IMR-90 (cell line): ENCODE measurements at regions of chr19 and their contacts with region 1.

Region 1: GRCh38 chr19:45200568-45200994 is 22.0 kb downstream of the BLOC1S3 start:
- DNase-seq: peak; percentile 57
- ATAC-seq: peak; percentile 86
- H3K4me3 ChIP-seq: no peak overlapping the region
- H3K27ac ChIP-seq: no peak overlapping the region
- H3K4me1 ChIP-seq: no peaks in the 10 kb centered on the region
- H3K27me3 ChIP-seq: no peaks in the 10 kb centered on the region
- CTCF ChIP-seq: peak; percentile 53
- POLR2A ChIP-seq: no peak
- RAD21 ChIP-seq: peak; percentile 68

Region 2: DNA sequence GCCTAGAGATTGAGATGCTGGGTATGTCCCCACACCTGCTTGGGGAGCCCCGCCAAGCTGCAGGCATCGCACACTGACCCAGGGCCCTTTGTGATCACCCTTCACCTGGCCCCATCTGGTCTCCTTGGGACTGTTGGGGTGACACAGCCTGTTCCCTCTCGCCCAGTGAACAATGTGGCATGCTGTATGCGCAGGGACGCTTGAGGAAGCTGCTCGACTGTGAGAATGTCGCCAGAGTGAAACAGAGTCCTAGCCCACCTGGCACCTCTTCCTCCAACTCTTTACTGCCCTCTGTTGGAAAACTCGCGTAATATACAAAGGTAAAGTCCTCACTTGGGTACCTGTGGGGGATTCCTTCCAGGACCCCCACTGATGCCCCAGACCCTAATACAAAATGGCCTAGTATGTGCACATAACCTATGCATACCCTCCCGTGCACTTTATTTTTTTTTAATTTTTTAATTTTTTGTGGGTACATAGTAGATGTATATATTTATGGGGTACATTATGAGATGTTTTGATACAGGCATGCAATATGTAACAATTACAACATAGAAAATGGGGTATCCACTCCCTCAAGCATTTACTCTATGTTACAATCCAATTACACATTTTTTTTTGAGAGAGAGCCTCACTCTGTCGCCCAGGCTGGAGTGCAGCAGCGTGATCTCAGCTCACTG is 13.0 kb before region 1 on chr19:
- CTCF ChIA-PET with region 1: interaction called, 3 read pairs
- POLR2A ChIA-PET with region 1: interaction called, 15 read pairs
- dilution Hi-C with region 1: no loop called
- in situ Hi-C with region 1: no loop called
- intact Hi-C with region 1: no loop called
- DNase-seq: no peak
- ATAC-seq: no peak
- H3K4me3 ChIP-seq: no peak overlapping the region
- H3K27ac ChIP-seq: no peak overlapping the region
- H3K4me1 ChIP-seq: no peaks in the 10 kb centered on the region
- H3K27me3 ChIP-seq: no peaks in the 10 kb centered on the region
- CTCF ChIP-seq: peak; percentile 40
- POLR2A ChIP-seq: no peak
- RAD21 ChIP-seq: peak; percentile 25; the same call in 1 of the 2 replicates

Region 3: DNA sequence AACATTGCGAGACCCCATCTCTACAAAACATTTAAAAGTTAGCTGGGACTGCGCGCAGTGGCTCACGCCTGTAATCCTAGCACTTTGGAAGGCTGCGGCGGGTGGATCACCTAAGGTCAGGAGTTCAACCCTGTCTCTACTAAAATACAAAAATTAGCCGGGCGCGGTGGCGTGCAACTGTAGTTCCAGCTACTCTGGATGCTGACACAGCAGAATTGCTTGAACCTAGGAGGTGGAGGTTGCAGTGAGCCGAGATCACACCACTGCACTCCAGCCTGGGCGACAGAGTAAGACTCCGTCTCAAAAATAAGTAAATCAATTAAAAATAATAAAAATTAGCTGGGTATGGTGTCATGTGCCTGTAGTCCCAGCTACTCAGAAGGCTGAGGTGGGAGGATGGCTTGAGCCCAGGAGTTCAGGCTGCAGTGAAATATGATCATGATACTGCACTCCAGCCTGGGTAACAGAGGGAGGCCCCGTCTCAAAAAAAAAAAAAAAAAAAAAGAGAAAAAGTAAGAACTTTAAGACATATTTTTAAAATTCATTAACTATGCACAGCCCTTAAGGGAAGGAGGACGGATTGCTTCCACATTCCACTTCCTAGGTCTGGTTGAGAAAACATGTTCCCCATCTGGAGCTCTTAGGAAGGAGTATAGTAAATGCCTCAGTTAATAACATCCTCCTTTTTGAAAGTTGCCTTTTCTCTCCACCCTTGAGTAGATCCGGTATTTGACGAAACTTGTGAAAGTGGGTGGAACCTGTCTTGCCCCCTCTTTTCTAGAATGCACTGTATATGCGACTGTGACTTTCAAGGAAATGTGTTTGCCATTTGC is 18.5 kb after region 1 on chr19:
- CTCF ChIA-PET with region 1: no interaction called
- POLR2A ChIA-PET with region 1: interaction called, 23 read pairs
- dilution Hi-C with region 1: no loop called
- in situ Hi-C with region 1: no loop called
- intact Hi-C with region 1: no loop called
- DNase-seq: no peak
- ATAC-seq: no peak
- H3K4me3 ChIP-seq: no peak overlapping the region
- H3K27ac ChIP-seq: no peak overlapping the region
- H3K4me1 ChIP-seq: peaks cover 2% of the 10 kb centered on the region; the same call in 1 of the 2 replicates
- H3K27me3 ChIP-seq: peaks cover 66% of the 10 kb centered on the region
- CTCF ChIP-seq: no peak
- POLR2A ChIP-seq: no peak
- RAD21 ChIP-seq: no peak

Region 4: DNA sequence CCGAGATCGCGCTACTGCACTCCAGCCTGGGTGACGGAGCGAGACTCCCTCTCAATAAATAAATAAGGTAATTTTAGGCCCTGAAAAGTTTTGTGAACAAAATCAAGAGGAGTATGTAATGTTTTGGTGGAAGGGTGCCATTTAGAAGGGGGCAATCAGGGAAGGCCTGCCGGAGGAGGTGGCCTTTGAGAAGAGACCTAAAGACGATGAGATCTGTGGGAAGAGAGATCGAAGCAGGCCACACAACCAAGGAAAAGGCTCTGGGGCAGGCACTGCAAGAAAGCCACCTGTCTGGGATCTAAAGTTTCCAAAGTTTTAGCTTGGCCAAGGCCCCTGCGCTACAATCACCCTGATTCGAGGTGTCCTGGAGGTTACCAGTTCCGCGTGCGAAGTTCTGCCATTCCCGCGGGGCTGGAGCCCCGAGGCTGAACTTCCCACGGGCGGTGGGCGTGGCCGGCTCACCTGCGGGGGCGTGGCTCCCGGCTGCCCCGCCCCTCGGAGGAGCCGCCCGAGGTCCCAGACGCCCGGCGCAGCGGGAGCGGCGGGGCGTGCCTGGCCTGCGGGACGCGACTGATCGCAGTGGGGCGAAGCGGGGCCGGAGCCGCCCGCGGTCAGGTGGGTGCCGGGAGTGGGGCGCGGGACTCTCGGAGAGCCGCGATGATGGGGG is 139.8 kb after region 1 on chr19 and contains the start of gene KLC3:
- CTCF ChIA-PET with region 1: interaction called, 3 read pairs
- POLR2A ChIA-PET with region 1: no interaction called
- dilution Hi-C with region 1: no loop called
- in situ Hi-C with region 1: no loop called
- intact Hi-C with region 1: loop called (anchors 1 kb)
- DNase-seq: no peak
- ATAC-seq: no peak
- H3K4me3 ChIP-seq: no peak within 1 kb of the TSS
- H3K27ac ChIP-seq: no peak within 1 kb of the TSS
- H3K4me1 ChIP-seq: no peaks in the 10 kb centered on the region
- H3K27me3 ChIP-seq: peaks cover 17% of the 10 kb centered on the region
- CTCF ChIP-seq: no peak
- POLR2A ChIP-seq: no peak
- RAD21 ChIP-seq: no peak
- total RNA-seq, gene KLC3: under 0.01 and 0.18 TPM in 2 replicates